Activated naive CD4-positive, alpha-beta T cell treated with anti-CD3 and anti-CD28 coated beads for 36 hours (primary cell): ENCODE measurements at regions of chr4 and their contacts with region 1.

Region 1: DNA sequence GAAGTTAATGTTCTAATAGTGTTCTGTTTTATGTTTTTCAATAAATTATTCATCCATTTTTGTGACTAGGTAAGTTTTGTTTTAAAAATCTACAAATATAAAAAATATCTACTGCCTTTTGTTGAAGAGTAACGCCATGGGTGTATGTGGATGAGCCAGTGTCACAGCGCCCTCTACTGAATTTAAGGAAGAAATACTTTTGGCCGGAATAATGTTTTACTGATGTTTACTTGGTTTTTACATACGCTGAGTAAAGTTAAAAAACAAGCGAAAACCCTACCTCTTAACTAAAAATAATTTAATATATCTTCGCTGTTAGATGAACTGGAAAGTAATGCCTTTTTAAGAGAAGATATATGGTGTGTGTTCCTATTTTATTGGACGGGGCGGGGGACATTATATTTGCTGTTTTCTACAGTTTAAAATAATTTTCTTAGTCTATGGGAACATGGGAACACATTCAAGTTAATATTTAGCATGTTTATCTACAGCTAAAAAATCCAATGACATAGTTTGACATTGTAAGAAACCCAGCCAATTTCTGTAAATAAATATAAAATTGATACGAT is 86.1 kb downstream of the CPE start:
- DNase-seq: peak; percentile 26
- H3K4me3 Mint-ChIP-seq: no peak overlapping the region
- H3K27ac Mint-ChIP-seq: no peak overlapping the region
- H3K4me1 Mint-ChIP-seq: no peaks in the 10 kb centered on the region
- H3K27me3 Mint-ChIP-seq: no peaks in the 10 kb centered on the region

Region 2: DNA sequence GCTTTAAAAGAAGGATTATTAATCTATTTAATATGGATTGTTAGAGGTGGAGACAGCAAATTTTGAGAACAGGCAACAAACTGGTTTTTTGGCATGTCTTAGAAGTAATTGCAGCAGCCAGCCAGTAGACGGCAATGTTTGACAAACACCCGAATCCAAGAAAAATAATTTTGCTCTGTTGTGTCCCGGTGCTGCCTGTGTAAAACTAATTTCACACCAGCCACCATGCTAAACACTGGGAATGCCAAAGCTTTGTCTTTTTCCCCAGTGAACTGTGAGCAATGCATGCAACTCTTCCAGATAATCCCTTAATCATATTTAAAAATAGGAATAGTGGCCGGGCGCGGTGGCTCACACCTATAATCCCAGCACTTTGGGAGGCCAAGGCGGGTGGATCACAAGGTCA is 685.1 kb before region 1 on chr4:
- CTCF ChIA-PET with region 1: no interaction called
- intact Hi-C with region 1: loop called (anchors 2 kb)
- DNase-seq: peak; percentile 51
- H3K4me3 Mint-ChIP-seq: no peak overlapping the region
- H3K27ac Mint-ChIP-seq: no peak overlapping the region
- H3K4me1 Mint-ChIP-seq: no peaks in the 10 kb centered on the region
- H3K27me3 Mint-ChIP-seq: no peaks in the 10 kb centered on the region

Region 3: GRCh38 chr4:165112368-165113139 is 352.3 kb before region 1 on chr4 and contains the start of gene TMEM192:
- CTCF ChIA-PET with region 1: interaction called, 4 read pairs
- intact Hi-C with region 1: loop called (anchors 1 kb)
- DNase-seq: peak; percentile 93
- H3K4me3 Mint-ChIP-seq: peak within 1 kb of the TSS; percentile 94
- H3K27ac Mint-ChIP-seq: peak within 1 kb of the TSS; percentile 74
- H3K4me1 Mint-ChIP-seq: peaks cover 13% of the 10 kb centered on the region
- H3K27me3 Mint-ChIP-seq: no peaks in the 10 kb centered on the region
- total RNA-seq, gene TMEM192: 6.3 to 8.9 TPM

Region 4: DNA sequence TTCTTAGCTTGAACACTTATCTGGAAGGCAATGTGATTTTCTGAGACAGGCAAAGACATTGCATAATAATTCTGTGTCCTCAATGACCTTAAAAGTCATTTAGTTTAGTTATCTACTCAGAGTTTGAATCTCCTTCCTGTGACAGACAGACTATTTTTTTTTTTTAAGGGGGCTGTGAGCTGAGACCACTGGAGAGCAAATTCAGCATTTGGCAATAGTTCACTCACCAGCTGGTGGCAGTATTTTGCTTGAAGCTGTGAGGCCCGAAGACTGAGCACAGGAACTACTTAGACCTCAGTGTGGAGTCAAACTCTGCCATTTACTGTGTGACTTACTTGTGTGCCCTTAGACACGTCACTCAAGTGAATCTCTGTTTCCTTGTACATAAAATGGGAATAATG is 109.0 kb before region 1 on chr4:
- CTCF ChIA-PET with region 1: interaction called, 3 read pairs
- intact Hi-C with region 1: loop called (anchors 1 kb)
- DNase-seq: peak; percentile 29
- H3K4me3 Mint-ChIP-seq: no peak overlapping the region
- H3K27ac Mint-ChIP-seq: no peak overlapping the region
- H3K4me1 Mint-ChIP-seq: no peaks in the 10 kb centered on the region
- H3K27me3 Mint-ChIP-seq: peaks cover 15% of the 10 kb centered on the region

Region 5: DNA sequence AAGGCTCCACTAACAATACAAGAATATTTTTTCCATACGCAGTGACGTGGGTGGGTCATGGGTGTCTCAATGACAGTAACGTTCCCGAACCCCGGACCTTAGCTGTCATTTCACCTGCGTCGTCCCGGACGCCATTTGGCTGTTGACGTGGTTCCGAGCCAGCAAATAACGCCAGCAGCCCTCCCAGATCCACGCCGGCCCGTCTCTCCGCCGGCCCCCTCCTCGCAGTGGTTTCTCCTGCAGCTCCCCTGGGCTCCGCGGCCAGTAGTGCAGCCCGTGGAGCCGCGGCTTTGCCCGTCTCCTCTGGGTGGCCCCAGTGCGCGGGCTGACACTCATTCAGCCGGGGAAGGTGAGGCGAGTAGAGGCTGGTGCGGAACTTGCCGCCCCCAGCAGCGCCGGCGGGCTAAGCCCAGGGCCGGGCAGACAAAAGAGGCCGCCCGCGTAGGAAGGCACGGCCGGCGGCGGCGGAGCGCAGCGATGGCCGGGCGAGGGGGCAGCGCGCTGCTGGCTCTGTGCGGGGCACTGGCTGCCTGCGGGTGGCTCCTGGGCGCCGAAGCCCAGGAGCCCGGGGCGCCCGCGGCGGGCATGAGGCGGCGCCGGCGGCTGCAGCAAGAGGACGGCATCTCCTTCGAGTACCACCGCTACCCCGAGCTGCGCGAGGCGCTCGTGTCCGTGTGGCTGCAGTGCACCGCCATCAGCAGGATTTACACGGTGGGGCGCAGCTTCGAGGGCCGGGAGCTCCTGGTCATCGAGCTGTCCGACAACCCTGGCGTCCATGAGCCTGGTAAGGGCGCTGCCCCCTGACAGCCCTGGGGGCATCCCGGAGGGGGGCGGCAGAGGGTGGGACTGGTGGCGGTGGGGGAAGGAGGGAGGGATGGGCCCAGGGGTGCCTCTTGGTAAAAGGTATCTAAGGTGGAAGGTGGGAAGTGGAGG is 85.9 kb before region 1 on chr4 and contains the start of gene CPE:
- CTCF ChIA-PET with region 1: interaction called, 3 read pairs
- intact Hi-C with region 1: loop called (anchors 1 kb)
- DNase-seq: peak; percentile 81
- H3K4me3 Mint-ChIP-seq: peak within 1 kb of the TSS; percentile 70
- H3K27ac Mint-ChIP-seq: no peak within 1 kb of the TSS
- H3K4me1 Mint-ChIP-seq: no peaks in the 10 kb centered on the region
- H3K27me3 Mint-ChIP-seq: peaks cover 19% of the 10 kb centered on the region
- total RNA-seq, gene CPE: 0.10 TPM in 1 of 2 experiments, not detected in the other

Region 6: GRCh38 chr4:165738571-165738970 is 273.7 kb after region 1 on chr4:
- CTCF ChIA-PET with region 1: no interaction called
- intact Hi-C with region 1: no loop called
- DNase-seq: no peak
- H3K4me3 Mint-ChIP-seq: no peak overlapping the region
- H3K27ac Mint-ChIP-seq: no peak overlapping the region
- H3K4me1 Mint-ChIP-seq: no peaks in the 10 kb centered on the region
- H3K27me3 Mint-ChIP-seq: no peaks in the 10 kb centered on the region